Activated B cell treated with CpG ODN at 0.5 μM for 24 hours (primary cell): ENCODE measurements at regions of chr14 and their contacts with region 1.

Region 1: DNA sequence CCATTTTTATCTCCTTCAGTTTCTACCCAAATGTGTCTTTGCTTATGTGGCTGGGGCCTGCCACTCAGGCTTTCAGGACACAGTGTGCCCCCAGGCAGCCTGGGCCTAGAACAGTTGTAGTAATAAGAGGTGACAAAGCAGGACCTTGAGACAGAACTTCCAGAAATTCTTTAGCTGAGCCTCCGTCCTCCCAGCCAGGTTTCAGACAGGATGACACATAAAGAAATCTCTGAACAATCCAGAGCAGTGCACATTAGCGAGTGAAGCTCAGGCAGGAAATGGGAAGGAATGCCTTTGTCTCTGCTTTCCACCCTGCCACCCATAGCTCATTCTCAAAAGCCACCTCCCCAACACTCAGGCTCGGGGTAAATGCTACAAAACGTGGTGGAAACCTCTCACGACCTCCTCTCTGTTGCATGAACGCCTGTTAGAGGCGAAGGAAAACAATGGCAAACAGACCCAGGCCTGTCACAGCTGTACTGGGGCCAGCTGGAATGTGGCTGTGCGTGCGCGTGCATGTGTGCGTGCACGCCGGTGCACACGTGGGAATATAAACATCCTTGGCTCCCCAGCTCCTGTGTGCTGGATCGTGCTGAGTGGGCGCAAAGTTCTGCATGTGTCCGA is 286.7 kb downstream of the ZFP36L1 start:
- DNase-seq: no peak
- ATAC-seq: peak; percentile 10
- H3K4me3 Mint-ChIP-seq: peak overlapping the region; percentile 62
- H3K27ac Mint-ChIP-seq: peak overlapping the region; percentile 98
- H3K4me1 Mint-ChIP-seq: peaks cover 87% of the 10 kb centered on the region
- H3K27me3 Mint-ChIP-seq: no peaks in the 10 kb centered on the region
- CTCF ChIP-seq: no peak

Region 2: DNA sequence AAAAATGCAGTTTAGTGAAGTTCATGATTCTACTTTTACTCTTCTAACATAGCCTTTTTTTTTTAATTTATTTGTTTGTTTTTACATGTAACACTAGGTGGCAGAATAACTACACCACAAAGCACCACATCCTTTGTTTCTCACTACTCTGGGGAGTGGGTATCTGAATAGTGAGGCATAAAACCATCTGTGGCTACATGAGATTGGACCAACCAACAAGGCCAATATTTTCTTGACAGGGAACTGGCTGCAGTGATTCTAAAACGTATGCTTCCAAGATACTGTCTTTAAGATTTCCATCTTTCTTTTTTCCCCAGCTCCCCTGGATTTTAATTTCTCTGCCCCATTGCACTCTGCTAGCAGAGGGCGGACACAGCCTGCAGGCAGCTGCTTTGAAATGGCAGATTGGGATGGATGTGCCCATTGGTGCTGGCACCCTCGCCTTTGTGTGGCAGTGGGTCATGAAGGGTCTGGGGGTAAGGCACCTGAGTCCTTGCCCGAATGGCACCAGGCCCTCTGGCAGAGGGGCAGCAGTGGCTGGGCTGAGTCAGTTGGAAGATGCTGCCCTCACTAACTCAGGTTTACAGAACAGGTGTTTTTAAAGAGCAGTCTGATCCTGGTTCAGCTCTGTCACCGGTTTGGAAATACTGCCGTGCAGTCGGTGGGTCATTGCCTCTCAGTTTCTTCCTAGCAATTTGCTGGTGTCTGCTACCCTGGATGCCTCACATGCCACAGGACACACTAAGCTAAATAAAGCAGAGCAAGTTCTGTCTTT is 257.5 kb before region 1 on chr14:
- CTCF ChIA-PET with region 1: interaction called, 19 read pairs
- POLR2A ChIA-PET with region 1: interaction called, 74 read pairs
- intact Hi-C with region 1: loop called (anchors 1 kb)
- DNase-seq: peak; percentile 34
- ATAC-seq: peak; percentile 77
- H3K4me3 Mint-ChIP-seq: peak overlapping the region; percentile 19
- H3K27ac Mint-ChIP-seq: peak overlapping the region; percentile 90
- H3K4me1 Mint-ChIP-seq: peaks cover 72% of the 10 kb centered on the region
- H3K27me3 Mint-ChIP-seq: no peaks in the 10 kb centered on the region
- CTCF ChIP-seq: no peak

Region 3: DNA sequence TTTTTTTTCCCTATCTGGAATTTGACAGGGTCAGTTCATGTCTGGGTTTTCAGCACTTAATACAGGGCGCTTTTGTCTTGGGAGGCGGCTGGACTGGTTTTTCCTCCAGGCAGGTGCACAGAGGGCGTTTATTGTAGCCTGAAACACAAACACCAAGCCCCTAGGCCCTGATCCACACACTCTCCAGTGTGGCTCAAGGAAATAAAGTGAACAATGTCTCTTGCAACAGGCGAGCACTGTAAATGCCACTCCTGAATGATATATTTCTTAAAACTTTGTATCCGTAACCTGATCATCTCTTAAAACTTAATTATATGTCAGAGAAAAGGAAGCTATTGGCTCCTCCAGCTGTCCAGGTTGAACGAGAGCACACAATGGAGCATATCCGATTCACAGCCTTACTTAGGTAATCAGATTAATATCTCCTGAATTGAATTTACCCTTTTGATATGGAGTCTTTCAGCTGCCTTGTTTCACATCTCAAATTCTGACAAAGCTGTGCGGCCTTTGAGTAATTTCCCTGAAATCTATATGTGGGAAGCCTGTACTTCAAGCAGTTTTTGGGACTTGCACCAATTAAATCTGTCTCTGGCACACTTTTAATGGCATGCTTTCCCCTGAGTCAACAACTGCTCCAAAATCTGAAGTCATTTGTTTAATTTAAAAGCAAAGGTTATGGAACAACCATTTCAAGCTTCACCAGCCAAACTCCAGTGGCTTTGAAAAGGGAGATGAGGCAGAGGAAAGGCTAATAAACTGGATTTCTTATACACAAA is 198.9 kb before region 1 on chr14:
- CTCF ChIA-PET with region 1: no interaction called
- POLR2A ChIA-PET with region 1: interaction called, 16 read pairs
- intact Hi-C with region 1: no loop called
- DNase-seq: no peak
- ATAC-seq: no peak
- H3K4me3 Mint-ChIP-seq: no peak overlapping the region
- H3K27ac Mint-ChIP-seq: peak overlapping the region; percentile 84
- H3K4me1 Mint-ChIP-seq: peaks cover 72% of the 10 kb centered on the region
- H3K27me3 Mint-ChIP-seq: no peaks in the 10 kb centered on the region
- CTCF ChIP-seq: no peak

Region 4: GRCh38 chr14:68392393-68393141 is 113.6 kb before region 1 on chr14:
- CTCF ChIA-PET with region 1: no interaction called
- POLR2A ChIA-PET with region 1: interaction called, 12 read pairs
- intact Hi-C with region 1: no loop called
- DNase-seq: no peak
- ATAC-seq: no peak
- H3K4me3 Mint-ChIP-seq: peak overlapping the region; percentile 39
- H3K27ac Mint-ChIP-seq: peak overlapping the region; percentile 84
- H3K4me1 Mint-ChIP-seq: peaks cover 58% of the 10 kb centered on the region
- H3K27me3 Mint-ChIP-seq: no peaks in the 10 kb centered on the region
- CTCF ChIP-seq: no peak

Region 5: DNA sequence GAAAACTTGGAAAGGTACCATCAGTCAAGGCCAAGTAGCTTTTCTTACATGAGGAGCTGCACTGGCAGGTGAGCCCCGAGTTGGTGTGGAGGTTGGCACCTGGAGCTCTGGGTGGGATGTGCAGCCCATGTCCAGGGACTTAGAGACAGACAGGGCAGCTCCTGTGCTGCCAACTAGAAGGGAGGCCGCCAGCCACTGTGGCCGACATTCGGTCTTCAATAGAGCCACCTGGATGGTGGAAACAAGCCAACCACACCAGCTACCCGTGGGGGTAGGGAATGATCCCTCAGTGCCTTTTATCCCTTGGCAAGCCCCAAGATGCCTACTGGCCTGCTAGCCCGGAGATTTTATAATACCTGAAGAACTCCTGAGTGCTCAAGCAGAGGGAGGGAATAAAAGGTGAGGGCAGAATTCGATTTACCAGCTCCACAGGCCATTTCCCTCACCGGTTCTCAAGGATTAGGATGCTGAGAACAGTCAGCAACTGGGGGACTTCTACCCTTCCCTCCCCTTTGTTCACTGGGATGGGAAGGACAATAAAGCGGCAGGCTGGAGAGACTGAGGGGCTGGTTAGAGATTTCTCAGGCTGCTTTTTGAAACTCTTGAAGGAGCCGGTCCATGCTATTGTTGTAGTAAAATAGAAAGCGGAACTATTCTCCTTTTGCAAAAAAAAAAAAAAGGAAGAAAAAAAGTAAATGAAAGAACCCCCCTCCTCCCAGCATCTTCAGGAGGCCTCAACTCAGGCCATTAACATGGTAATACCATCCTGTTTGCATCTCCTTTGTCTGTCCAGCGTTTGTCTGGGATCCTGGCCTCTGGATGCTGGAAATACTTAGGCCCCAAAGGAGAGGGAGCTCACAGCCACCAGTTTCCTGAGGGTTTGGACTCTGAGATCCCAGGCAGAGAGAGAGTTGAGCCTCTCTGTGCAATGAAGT is 34.8 kb before region 1 on chr14:
- CTCF ChIA-PET with region 1: interaction called, 8 read pairs
- POLR2A ChIA-PET with region 1: interaction called, 53 read pairs
- intact Hi-C with region 1: loop called (anchors 1 kb)
- DNase-seq: peak; percentile 22
- ATAC-seq: peak; percentile 69
- H3K4me3 Mint-ChIP-seq: peak overlapping the region; percentile 38
- H3K27ac Mint-ChIP-seq: peak overlapping the region; percentile 96
- H3K4me1 Mint-ChIP-seq: peaks cover 85% of the 10 kb centered on the region
- H3K27me3 Mint-ChIP-seq: no peaks in the 10 kb centered on the region
- CTCF ChIP-seq: no peak

Region 6: GRCh38 chr14:68526420-68527105 is 20.4 kb after region 1 on chr14:
- CTCF ChIA-PET with region 1: no interaction called
- POLR2A ChIA-PET with region 1: interaction called, 74 read pairs
- intact Hi-C with region 1: loop called (anchors 2 kb)
- DNase-seq: no peak
- ATAC-seq: no peak
- H3K4me3 Mint-ChIP-seq: no peak overlapping the region
- H3K27ac Mint-ChIP-seq: peak overlapping the region; percentile 61
- H3K4me1 Mint-ChIP-seq: peaks cover 50% of the 10 kb centered on the region
- H3K27me3 Mint-ChIP-seq: no peaks in the 10 kb centered on the region
- CTCF ChIP-seq: no peak

Region 7: GRCh38 chr14:68734231-68734775 is 228.2 kb after region 1 on chr14:
- CTCF ChIA-PET with region 1: no interaction called
- POLR2A ChIA-PET with region 1: interaction called, 11 read pairs
- intact Hi-C with region 1: no loop called
- DNase-seq: no peak
- ATAC-seq: peak; percentile 74
- H3K4me3 Mint-ChIP-seq: peak overlapping the region; percentile 39
- H3K27ac Mint-ChIP-seq: peak overlapping the region; percentile 82
- H3K4me1 Mint-ChIP-seq: peaks cover 78% of the 10 kb centered on the region
- H3K27me3 Mint-ChIP-seq: no peaks in the 10 kb centered on the region
- CTCF ChIP-seq: no peak